Calu3 (cell line): ENCODE measurements at regions of chr20 and their contacts with region 1.

Region 1: GRCh38 chr20:53738039-53738944 is 144.7 kb upstream of the ZNF217 start:
- DNase-seq: peak; percentile 88
- H3K4me3 Mint-ChIP-seq: peak overlapping the region; percentile 77
- H3K27ac Mint-ChIP-seq: peak overlapping the region; percentile 98
- H3K4me1 Mint-ChIP-seq: peaks cover 73% of the 10 kb centered on the region
- H3K27me3 Mint-ChIP-seq: no peaks in the 10 kb centered on the region
- CTCF ChIP-seq: no peak

Region 2: GRCh38 chr20:53623454-53624211 is 114.7 kb before region 1 on chr20:
- CTCF ChIA-PET with region 1: interaction called, 15 read pairs
- intact Hi-C with region 1: loop called (anchors 1 kb)
- DNase-seq: peak; percentile 71
- H3K4me3 Mint-ChIP-seq: peak overlapping the region; percentile 67
- H3K27ac Mint-ChIP-seq: peak overlapping the region; percentile 99
- H3K4me1 Mint-ChIP-seq: peaks cover 40% of the 10 kb centered on the region
- H3K27me3 Mint-ChIP-seq: no peaks in the 10 kb centered on the region
- CTCF ChIP-seq: no peak

Region 3: DNA sequence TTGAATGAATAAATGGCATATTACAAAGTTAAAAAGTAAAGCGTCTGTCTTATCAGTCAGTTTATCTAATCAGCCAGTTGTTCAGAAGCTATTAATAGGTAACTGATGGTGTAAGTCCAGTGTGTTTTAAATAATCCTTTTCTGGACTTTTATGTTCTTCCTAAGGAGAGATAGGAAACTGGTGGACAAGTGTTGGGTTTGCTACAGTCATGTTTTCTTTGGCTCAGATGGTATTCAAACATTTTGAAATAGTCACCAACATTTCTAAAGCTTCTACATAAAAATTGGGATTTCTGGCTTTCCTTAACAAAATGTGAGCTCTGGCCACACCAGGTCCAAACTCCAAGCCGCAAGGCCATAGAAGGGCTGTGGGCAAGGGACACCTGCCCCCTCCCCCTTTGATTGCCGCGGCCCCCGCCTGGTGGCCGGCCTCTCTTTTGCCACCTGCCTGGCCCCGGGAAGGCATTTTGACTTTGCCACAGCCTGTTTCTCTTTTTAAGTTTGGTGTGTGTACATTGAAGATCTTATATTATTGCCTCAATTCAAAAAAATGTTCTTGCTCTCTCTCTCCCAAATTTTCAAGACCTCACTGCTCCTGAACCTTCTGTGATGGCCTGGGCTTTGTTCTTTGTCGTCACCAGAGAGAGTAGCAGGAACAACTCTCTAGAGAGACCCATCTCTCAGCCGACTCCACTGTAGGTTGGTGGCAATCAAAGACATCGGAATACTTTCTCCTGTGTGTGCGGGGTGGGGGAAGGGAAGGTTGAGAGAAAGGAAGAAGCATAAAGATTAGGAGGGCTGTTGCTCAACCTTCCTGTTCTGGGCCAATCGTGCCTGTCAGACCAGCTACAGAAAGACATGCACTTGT is 60.6 kb before region 1 on chr20:
- CTCF ChIA-PET with region 1: interaction called, 5 read pairs
- intact Hi-C with region 1: loop called (anchors 2 kb)
- DNase-seq: peak; percentile 76
- H3K4me3 Mint-ChIP-seq: peak overlapping the region; percentile 51
- H3K27ac Mint-ChIP-seq: peak overlapping the region; percentile 76
- H3K4me1 Mint-ChIP-seq: peaks cover 45% of the 10 kb centered on the region
- H3K27me3 Mint-ChIP-seq: no peaks in the 10 kb centered on the region
- CTCF ChIP-seq: peak; percentile 40

Region 4: DNA sequence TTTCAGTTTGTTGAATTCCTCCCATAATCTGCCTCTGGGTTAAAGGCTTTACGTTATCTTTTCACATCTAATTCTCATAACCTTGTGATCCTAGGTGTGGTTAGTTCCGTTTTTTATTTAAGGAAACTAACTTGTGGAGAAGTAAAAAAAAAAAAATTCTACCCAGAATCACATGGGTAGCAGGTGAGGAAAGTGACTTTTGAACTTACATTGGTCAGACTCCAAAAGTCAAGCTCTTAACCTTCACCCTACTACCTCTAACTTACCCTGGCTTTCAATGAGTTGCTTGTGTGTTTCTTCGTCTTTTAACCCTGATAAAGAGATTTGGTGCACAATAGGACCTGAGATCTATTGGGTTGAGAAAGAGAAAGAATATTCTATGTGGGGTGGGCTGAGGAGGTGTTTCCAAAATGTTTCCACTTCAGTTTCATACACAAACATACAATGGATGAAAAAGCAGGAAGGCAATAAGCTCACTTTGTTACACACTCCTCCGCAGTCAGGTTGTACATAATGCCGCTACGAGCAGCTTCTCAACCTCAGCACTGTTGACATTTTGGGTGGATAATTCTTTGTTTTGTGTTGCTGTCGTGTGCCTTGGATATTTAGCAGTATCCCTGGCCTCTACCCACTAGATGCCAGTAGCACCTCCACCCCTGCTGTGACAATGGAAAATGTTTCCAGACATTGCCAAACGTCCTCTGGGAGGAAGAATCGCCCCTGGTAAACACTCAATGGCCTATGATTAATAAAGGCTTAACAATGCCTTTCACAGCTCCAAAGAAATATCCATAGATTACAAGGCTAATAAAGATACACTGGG is 48.4 kb after region 1 on chr20:
- CTCF ChIA-PET with region 1: interaction called, 8 read pairs
- intact Hi-C with region 1: loop called (anchors 2 kb)
- DNase-seq: peak; percentile 37
- H3K4me3 Mint-ChIP-seq: peak overlapping the region; percentile 51
- H3K27ac Mint-ChIP-seq: peak overlapping the region; percentile 78
- H3K4me1 Mint-ChIP-seq: peaks cover 42% of the 10 kb centered on the region
- H3K27me3 Mint-ChIP-seq: no peaks in the 10 kb centered on the region
- CTCF ChIP-seq: no peak

Region 5: GRCh38 chr20:53899351-53900167 is 161.3 kb after region 1 on chr20:
- CTCF ChIA-PET with region 1: interaction called, 16 read pairs
- intact Hi-C with region 1: no loop called
- DNase-seq: peak; percentile 50
- H3K4me3 Mint-ChIP-seq: no peak overlapping the region
- H3K27ac Mint-ChIP-seq: peak overlapping the region; percentile 89
- H3K4me1 Mint-ChIP-seq: peaks cover 62% of the 10 kb centered on the region
- H3K27me3 Mint-ChIP-seq: no peaks in the 10 kb centered on the region
- CTCF ChIP-seq: no peak